ENCODE measurements at regions of chr17 and their contacts with region 1.

Region 1: GRCh38 chr17:28384281-28385036 is 13.0 kb downstream of the SARM1 start:
- DNase-seq: peak; percentile 42 to 76 (median 49)
- H3K4me3 ChIP-seq: peak overlapping the region; percentile 96
- H3K4me3 Mint-ChIP-seq: peak overlapping the region; percentile 90 to 95 (median 94)
- H3K27ac ChIP-seq: peak overlapping the region; percentile 31
- H3K27ac Mint-ChIP-seq: peak overlapping the region; percentile 50 to 92 (median 77)
- H3K4me1 ChIP-seq: peaks cover 19% of the 10 kb centered on the region
- H3K4me1 Mint-ChIP-seq: peaks cover 21 to 41% (median 25%) of the 10 kb centered on the region in 3 donors
- H3K27me3 ChIP-seq: no peaks in the 10 kb centered on the region
- H3K27me3 Mint-ChIP-seq: no peaks in the 10 kb centered on the region

Region 2: DNA sequence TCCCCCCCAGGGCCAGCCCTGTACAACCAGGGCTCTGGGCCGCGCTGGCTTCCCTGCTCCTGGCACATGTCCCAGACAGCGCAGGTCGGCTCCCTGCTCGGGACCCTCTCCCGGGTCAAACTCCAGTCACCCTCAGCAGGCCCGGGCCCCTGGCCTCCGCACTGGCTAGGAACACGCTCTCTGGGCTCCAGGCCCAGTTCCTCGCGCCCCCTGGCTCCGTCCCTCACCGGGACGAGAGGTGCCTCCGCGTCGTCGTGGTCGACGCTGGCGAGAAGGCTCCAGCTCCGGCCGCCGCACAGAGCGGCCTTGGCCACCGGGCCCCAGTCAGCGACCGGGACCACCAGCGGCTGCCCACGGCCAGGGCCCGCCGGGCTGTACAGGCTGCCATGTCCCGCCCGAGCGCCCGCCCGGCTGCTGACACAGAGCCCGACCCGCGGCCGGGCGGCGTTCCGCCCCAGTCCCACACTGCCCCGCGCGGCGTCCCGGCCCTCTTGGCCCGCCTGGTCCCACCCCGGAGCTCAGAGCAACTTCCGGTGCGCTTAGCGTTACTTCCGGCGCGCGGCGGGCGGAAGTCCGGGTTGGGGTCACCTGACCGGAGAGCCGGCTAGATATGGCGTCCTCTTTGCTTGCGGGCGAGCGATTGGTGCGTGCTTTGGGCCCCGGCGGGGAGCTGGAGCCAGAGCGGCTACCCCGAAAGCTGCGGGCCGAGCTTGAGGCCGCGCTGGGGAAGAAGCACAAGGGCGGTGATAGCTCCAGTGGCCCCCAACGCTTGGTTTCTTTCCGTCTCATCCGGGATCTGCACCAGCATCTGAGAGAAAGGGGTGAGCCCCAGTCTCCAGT is 27.2 kb before region 1 on chr17 and contains the start of gene POLDIP2:
- CTCF ChIA-PET with region 1: interaction called, 6 read pairs
- POLR2A ChIA-PET with region 1: interaction called, 15 read pairs
- DNase-seq: peak; percentile 93 to 97 (median 95)
- H3K4me3 ChIP-seq: peak within 1 kb of the TSS; percentile 89
- H3K4me3 Mint-ChIP-seq: peak within 1 kb of the TSS; percentile 91 to 96 (median 93)
- H3K27ac ChIP-seq: peak within 1 kb of the TSS; percentile 81
- H3K27ac Mint-ChIP-seq: peak within 1 kb of the TSS; percentile 92 to 98 (median 96)
- H3K4me1 ChIP-seq: peaks cover 22% of the 10 kb centered on the region
- H3K4me1 Mint-ChIP-seq: peaks cover 24 to 35% (median 25%) of the 10 kb centered on the region in 3 donors
- H3K27me3 ChIP-seq: no peaks in the 10 kb centered on the region
- H3K27me3 Mint-ChIP-seq: no peaks in the 10 kb centered on the region
- total RNA-seq, gene POLDIP2: 134 to 135 TPM

Measured in CD8-positive, alpha-beta memory T cell (primary cell).